ENCODE measurements at regions of chr1 and their contacts with region 1.

Region 1: DNA sequence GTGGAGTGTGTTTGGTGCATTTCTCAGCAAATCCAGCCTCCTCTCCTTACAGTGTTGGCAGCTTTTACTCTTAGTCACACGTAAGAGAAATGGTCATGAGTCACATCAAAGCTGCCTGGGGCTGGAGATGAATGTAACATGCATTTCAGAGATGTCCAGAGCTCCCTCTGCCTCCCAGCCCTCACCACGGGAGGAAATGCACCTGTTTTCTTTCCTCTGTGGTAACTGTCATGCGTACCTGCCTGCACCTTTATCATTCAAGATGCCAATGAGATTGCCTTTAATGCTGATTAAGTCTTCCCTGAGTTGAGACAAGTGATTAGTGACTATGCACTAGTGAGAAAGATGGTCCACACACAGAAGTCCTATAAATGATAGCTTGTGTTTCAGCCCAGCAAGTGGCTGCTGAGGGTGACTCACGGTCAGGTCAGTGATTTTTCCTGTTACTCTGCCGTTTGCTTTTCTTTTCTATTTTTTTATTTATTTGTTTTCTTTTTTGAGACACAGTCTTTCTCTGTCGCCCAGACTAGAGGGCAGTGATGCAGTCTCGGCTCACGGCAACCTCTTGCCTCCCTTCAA is 277.3 kb upstream of the FMN2 start:
- DNase-seq: peak; percentile 100
- H3K4me3 Mint-ChIP-seq: peak overlapping the region; percentile 38
- H3K27ac Mint-ChIP-seq: peak overlapping the region; percentile 8
- H3K4me1 Mint-ChIP-seq: peaks cover 36% of the 10 kb centered on the region
- H3K27me3 Mint-ChIP-seq: no peaks in the 10 kb centered on the region
- CTCF ChIP-seq: peak; percentile 4

Region 2: GRCh38 chr1:239765163-239765562 is 49.2 kb before region 1 on chr1:
- CTCF ChIA-PET with region 1: no interaction called
- POLR2A ChIA-PET with region 1: no interaction called
- intact Hi-C with region 1: no loop called
- DNase-seq: no peak
- H3K4me3 Mint-ChIP-seq: no peak overlapping the region
- H3K27ac Mint-ChIP-seq: no peak overlapping the region
- H3K4me1 Mint-ChIP-seq: no peaks in the 10 kb centered on the region
- H3K27me3 Mint-ChIP-seq: no peaks in the 10 kb centered on the region
- CTCF ChIP-seq: no peak

Region 3: DNA sequence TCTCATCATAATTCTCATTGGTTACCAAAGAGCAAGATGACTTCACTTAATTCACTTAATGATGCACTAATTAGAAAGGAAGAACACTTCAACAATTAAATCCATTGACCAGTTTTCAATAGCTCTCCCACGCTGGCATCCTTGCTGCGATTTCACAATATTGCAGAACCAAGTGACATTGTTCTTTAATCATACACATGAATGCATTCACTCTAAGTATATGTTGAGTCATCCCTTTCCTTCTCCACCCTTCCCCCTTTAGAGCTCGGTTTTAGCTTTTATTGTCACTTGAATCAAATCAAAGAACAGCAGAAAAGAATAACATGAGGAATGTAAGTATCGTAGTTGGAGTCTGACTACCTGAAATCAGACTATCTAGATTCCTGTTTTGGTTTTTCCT is 43.7 kb after region 1 on chr1:
- CTCF ChIA-PET with region 1: interaction called, 6 read pairs
- POLR2A ChIA-PET with region 1: interaction called, 10 read pairs
- intact Hi-C with region 1: no loop called
- DNase-seq: peak; percentile 84
- H3K4me3 Mint-ChIP-seq: no peak overlapping the region
- H3K27ac Mint-ChIP-seq: no peak overlapping the region
- H3K4me1 Mint-ChIP-seq: peaks cover 8% of the 10 kb centered on the region
- H3K27me3 Mint-ChIP-seq: no peaks in the 10 kb centered on the region
- CTCF ChIP-seq: no peak

Region 4: DNA sequence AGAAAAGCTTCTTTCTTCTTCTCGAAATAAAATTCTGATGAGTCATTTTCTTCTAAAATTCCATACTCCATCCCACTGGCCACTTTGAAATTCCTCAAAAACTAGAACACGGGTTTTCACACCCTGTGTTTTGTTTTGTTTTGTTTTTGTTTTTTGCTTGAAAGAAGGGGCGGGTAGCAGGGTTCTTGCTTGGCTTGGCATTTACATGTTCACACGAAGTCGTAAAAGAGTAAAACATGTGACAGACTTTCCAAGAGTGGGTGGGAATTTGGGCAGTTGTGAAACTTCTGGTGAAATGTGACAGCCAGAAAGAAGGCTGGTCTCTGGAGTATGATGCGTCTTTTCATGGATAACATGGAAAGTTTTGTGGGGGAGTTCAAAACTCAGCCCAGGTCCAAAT is 230.2 kb after region 1 on chr1:
- CTCF ChIA-PET with region 1: no interaction called
- POLR2A ChIA-PET with region 1: no interaction called
- intact Hi-C with region 1: no loop called
- DNase-seq: peak; percentile 47
- H3K4me3 Mint-ChIP-seq: no peak overlapping the region
- H3K27ac Mint-ChIP-seq: no peak overlapping the region
- H3K4me1 Mint-ChIP-seq: no peaks in the 10 kb centered on the region
- H3K27me3 Mint-ChIP-seq: no peaks in the 10 kb centered on the region
- CTCF ChIP-seq: no peak

Measured in MCF 10A (cell line).